Body of pancreas (tissue), 4 donors: ENCODE measurements at regions of chr7 and their contacts with region 1.

Region 1: DNA sequence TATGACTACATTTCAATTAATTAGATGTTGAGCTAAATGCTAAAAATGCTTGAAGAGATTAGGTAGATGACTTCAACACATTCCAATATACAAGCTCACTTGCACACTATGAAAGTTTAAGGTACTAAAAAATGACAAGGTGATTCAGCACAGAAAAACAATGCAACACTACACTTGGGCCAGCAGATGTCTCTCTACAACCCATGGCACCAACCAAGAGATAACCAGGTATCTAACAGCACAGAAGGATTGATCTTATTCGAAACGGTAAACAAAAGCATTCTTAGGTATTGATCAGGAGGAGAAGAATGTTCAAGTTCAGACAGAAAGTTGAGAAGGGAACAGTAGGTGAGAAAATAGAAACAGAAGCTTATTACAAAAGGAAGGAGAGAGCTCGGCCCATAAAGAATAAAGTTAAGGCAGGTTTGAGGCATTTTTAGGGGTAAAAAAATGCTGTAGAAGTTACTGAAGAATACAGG is 248.2 kb upstream of the KLF14 start:
- DNase-seq: no peak
- ATAC-seq: peak; percentile 74
- H3K4me3 ChIP-seq: no peak overlapping the region
- H3K27ac ChIP-seq: peak overlapping the region in 1 of 4 donors; percentile 21
- H3K4me1 ChIP-seq: peaks cover 38% of the 10 kb centered on the region
- H3K27me3 ChIP-seq: no peaks in the 10 kb centered on the region
- CTCF ChIP-seq: peak; percentile 40 to 84 (median 70)
- POLR2A ChIP-seq: no peak

Region 2: DNA sequence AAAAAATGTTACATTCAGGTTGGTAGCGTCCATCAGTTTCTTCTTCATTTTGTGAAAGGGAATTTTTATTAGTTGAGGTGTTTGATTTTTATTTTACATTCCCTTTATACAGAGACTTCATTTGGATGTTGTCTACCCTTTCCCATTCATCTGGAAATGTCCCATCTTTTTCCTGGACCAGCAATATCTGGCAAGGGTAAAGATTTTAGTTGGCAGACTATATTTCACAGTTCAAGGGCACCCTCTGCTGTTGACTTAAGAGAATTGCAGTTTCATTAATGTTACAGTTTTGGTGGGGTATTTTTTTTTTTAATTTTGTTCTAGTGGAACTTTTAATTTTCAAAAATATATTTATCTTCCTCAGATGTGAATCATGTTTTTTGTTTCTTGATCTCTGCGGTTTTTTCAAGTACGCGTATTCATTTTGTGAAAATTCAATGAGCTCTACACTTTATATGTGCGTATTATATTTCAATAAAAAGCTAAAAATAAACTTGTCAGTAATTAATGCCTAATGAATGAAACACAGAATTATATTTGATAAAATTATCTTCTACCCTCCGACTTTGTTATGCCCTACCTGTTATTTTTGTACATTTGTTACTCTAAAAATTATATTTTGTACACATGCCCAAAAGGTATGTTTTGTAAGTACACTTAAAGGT is 150.2 kb before region 1 on chr7:
- intact Hi-C with region 1: no loop called
- DNase-seq: no peak
- ATAC-seq: peak; percentile 50
- H3K4me3 ChIP-seq: no peak overlapping the region
- H3K27ac ChIP-seq: no peak overlapping the region
- H3K4me1 ChIP-seq: no peaks in the 10 kb centered on the region
- H3K27me3 ChIP-seq: no peaks in the 10 kb centered on the region
- CTCF ChIP-seq: peak; percentile 14 to 68 (median 63)
- POLR2A ChIP-seq: no peak

Region 3: GRCh38 chr7:131040467-131040932 is 58.3 kb after region 1 on chr7:
- intact Hi-C with region 1: loop called (anchors 10 kb)
- DNase-seq: peak; percentile 63 to 78 (median 68)
- ATAC-seq: peak; percentile 81
- H3K4me3 ChIP-seq: no peak overlapping the region
- H3K27ac ChIP-seq: peak overlapping the region in 2 of 4 donors; percentile 7 to 48
- H3K4me1 ChIP-seq: peaks cover 12% of the 10 kb centered on the region
- H3K27me3 ChIP-seq: no peaks in the 10 kb centered on the region
- CTCF ChIP-seq: peak; percentile 67 to 90 (median 86)
- POLR2A ChIP-seq: no peak